ENCODE measurements at regions of chr11 and their contacts with region 1.

Region 1: GRCh38 chr11:20363500-20364411 is at the start of gene HTATIP2:
- DNase-seq: peak; percentile 94
- H3K4me3 Mint-ChIP-seq: peak within 1 kb of the TSS; percentile 87
- H3K27ac Mint-ChIP-seq: peak within 1 kb of the TSS; percentile 91
- H3K4me1 Mint-ChIP-seq: peaks cover 60% of the 10 kb centered on the region
- H3K27me3 Mint-ChIP-seq: no peaks in the 10 kb centered on the region
- total RNA-seq, gene HTATIP2: 48.3 and 53.9 TPM in 2 replicates

Region 2: DNA sequence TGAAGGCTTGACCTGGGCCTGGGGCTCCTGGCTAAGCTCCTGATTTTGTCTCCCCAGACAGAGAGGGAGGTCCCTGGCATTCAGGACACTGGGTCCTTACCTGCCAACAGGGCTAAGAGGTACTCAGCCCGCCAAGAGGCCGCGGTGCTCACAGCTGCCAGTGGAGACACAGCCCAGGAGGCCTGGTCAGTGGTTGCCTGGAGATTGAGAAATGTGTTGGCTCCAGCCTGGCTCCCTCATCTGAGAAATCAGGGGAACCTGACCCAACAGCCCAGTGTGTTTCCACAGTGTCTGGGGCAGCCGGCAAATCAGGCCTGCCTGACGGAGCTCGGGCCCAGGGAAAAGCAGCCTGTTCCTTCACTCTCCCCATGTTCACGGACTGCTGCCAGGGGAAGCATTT is 730.5 kb before region 1 on chr11:
- intact Hi-C with region 1: no loop called
- DNase-seq: no peak
- H3K4me3 Mint-ChIP-seq: no peak overlapping the region
- H3K27ac Mint-ChIP-seq: no peak overlapping the region
- H3K4me1 Mint-ChIP-seq: no peaks in the 10 kb centered on the region
- H3K27me3 Mint-ChIP-seq: no peaks in the 10 kb centered on the region

Region 3: GRCh38 chr11:20110908-20111669 is 252.7 kb before region 1 on chr11:
- intact Hi-C with region 1: no loop called
- DNase-seq: peak; percentile 82
- H3K4me3 Mint-ChIP-seq: no peak overlapping the region
- H3K27ac Mint-ChIP-seq: no peak overlapping the region
- H3K4me1 Mint-ChIP-seq: peaks cover 1% of the 10 kb centered on the region
- H3K27me3 Mint-ChIP-seq: no peaks in the 10 kb centered on the region

Region 4: DNA sequence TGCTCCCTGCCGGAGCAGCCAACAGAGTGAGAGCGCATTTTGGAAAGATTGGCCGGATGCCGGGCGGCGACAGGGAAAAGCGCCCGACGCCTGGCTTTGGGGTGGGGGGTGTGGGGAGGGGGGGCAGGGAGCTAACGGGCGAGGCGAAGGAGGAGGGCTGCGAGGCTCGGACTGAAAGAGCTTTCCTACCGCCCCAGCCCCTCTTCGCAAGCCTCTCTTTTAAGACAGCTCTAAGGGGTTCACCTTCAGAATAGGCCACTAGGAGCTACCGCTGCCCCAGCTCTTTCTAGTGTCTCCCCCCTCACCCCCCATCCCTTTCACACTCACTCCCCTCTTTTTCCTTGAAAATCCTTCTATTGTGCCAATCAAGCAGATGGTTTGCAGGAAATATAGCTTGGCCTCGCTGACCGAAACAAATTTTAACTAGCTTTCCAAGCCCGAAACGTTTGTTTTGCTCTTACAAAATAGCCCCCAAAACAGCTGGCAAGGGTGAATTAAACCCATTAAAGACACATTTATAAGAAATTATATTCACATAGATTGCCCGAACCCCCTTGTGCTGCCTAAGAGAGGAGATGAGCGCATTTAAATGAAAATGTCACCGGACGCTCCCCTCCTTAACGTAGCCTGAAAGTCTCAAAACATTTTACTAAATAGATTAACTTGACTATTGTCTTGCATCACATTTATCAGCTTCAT is 199.8 kb before region 1 on chr11:
- intact Hi-C with region 1: no loop called
- DNase-seq: no peak
- H3K4me3 Mint-ChIP-seq: no peak overlapping the region
- H3K27ac Mint-ChIP-seq: peak overlapping the region; percentile 48
- H3K4me1 Mint-ChIP-seq: peaks cover 4% of the 10 kb centered on the region
- H3K27me3 Mint-ChIP-seq: peaks cover 75% of the 10 kb centered on the region

Region 5: DNA sequence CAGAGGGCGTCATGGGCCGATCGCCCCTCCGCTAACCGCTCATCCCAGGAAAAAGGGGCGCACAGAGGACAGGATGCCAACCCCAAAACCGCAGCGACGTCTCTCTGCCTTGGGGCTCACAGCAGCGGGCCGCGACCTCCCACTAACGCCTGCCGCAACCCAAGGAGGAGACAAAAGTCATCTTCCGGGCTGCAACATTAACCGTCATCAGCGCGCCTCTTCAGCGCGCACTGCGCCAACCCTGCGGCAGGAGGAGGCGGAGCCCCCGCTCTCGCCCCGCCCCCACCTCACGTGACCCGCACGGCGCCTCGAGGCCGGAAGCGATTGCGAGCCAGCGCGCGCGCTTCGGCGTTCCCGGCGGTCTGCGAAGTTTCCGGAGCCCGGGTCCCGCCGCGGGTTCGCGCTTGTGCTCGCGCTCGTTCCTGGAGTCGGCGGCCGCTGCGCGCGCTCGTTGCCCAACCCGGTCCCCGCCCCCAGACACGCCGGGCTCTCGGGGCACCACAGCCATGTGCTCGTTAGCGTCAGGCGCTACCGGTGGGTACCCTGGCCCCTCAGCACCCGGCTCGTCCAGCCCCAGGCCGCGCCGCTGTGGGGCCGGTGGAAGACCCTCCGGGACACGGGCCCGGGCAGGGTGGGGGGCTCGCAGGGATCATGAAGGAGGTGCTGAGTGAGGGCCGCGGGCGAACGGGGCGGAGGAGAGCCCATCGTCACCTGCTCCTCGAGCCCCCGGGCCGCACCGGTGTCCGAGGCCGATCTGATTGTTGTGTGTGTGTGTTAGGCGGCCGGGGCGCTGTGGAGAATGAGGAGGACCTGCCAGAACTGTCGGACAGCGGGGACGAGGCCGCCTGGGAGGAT is 23.7 kb after region 1 on chr11 and contains the start of gene PRMT3:
- intact Hi-C with region 1: loop called (anchors 1 kb)
- DNase-seq: peak; percentile 99
- H3K4me3 Mint-ChIP-seq: peak within 1 kb of the TSS; percentile 92
- H3K27ac Mint-ChIP-seq: peak within 1 kb of the TSS; percentile 99
- H3K4me1 Mint-ChIP-seq: peaks cover 16% of the 10 kb centered on the region
- H3K27me3 Mint-ChIP-seq: no peaks in the 10 kb centered on the region
- total RNA-seq, gene PRMT3: 48.7 and 50.5 TPM in 2 replicates

Measured in activated CD4-positive, alpha-beta T cell treated with anti-CD3 and anti-CD28 coated beads, Interleukin-2, amount 10 ng/mL, durations not matched to agents 24 days and 14 days (primary cell).